MCF 10A (cell line): ENCODE measurements at regions of chr11 and their contacts with region 1.

Region 1: GRCh38 chr11:13772223-13773046 is 104.0 kb downstream of the FAR1 start:
- DNase-seq: peak; percentile 76
- H3K4me3 Mint-ChIP-seq: no peak overlapping the region
- H3K27ac Mint-ChIP-seq: no peak overlapping the region
- H3K4me1 Mint-ChIP-seq: no peaks in the 10 kb centered on the region
- H3K27me3 Mint-ChIP-seq: peaks cover 54% of the 10 kb centered on the region
- CTCF ChIP-seq: peak; percentile 74

Region 2: DNA sequence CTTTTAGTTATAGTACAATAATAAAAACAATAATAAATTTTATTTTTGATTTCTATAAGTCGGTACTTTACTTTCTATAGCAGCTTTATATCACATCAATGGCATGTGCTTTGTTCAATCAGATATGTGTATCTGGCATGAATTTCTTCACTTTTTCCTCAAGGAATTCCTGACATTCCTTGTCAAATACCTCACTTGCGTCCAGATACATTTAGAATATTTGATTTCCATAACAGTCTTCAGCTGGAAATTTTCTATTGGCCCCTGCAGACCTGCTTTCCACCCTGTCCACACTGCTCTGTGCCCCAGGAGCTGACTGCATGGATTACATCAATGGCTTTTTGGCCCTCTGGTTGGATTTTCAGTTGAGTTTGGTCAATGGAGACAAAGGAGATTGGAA is 10.7 kb before region 1 on chr11:
- CTCF ChIA-PET with region 1: interaction called, 46 read pairs
- POLR2A ChIA-PET with region 1: no interaction called
- intact Hi-C with region 1: no loop called
- DNase-seq: no peak
- H3K4me3 Mint-ChIP-seq: no peak overlapping the region
- H3K27ac Mint-ChIP-seq: no peak overlapping the region
- H3K4me1 Mint-ChIP-seq: peaks cover 4% of the 10 kb centered on the region
- H3K27me3 Mint-ChIP-seq: no peaks in the 10 kb centered on the region
- CTCF ChIP-seq: no peak

Region 3: GRCh38 chr11:13874597-13874996 is 102.2 kb after region 1 on chr11:
- CTCF ChIA-PET with region 1: interaction called, 5 read pairs
- POLR2A ChIA-PET with region 1: no interaction called
- intact Hi-C with region 1: loop called (anchors 5 kb)
- DNase-seq: no peak
- H3K4me3 Mint-ChIP-seq: no peak overlapping the region
- H3K27ac Mint-ChIP-seq: no peak overlapping the region
- H3K4me1 Mint-ChIP-seq: peaks cover 20% of the 10 kb centered on the region
- H3K27me3 Mint-ChIP-seq: peaks cover 19% of the 10 kb centered on the region
- CTCF ChIP-seq: no peak

Region 4: GRCh38 chr11:13949876-13950275 is 177.4 kb after region 1 on chr11:
- CTCF ChIA-PET with region 1: interaction called, 46 read pairs
- POLR2A ChIA-PET with region 1: no interaction called
- intact Hi-C with region 1: loop called (anchors 1 kb)
- DNase-seq: no peak
- H3K4me3 Mint-ChIP-seq: no peak overlapping the region
- H3K27ac Mint-ChIP-seq: no peak overlapping the region
- H3K4me1 Mint-ChIP-seq: no peaks in the 10 kb centered on the region
- H3K27me3 Mint-ChIP-seq: no peaks in the 10 kb centered on the region
- CTCF ChIP-seq: no peak

Region 5: DNA sequence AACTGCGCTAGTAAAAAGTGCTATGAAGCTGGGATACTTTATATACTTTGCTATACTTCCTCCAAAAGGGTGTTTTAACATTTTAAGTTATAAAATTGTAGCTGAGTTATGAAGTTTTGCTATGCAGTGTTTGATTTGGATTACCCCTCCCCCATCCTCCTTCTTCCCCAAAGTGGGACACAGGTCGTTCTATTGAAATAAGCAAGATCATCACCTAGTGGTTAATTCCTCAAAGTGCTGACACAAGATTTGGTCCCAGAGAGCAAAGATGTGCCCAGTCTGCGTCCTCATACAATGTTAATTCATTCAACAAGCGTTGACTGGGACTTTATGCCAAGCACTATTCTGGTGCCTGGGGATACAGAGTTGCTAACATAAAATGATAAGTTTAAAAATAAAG is 268.6 kb after region 1 on chr11:
- CTCF ChIA-PET with region 1: interaction called, 3 read pairs
- POLR2A ChIA-PET with region 1: no interaction called
- intact Hi-C with region 1: loop called (anchors 5 kb)
- DNase-seq: peak; percentile 33
- H3K4me3 Mint-ChIP-seq: no peak overlapping the region
- H3K27ac Mint-ChIP-seq: no peak overlapping the region
- H3K4me1 Mint-ChIP-seq: no peaks in the 10 kb centered on the region
- H3K27me3 Mint-ChIP-seq: peaks cover 35% of the 10 kb centered on the region
- CTCF ChIP-seq: no peak

Region 6: DNA sequence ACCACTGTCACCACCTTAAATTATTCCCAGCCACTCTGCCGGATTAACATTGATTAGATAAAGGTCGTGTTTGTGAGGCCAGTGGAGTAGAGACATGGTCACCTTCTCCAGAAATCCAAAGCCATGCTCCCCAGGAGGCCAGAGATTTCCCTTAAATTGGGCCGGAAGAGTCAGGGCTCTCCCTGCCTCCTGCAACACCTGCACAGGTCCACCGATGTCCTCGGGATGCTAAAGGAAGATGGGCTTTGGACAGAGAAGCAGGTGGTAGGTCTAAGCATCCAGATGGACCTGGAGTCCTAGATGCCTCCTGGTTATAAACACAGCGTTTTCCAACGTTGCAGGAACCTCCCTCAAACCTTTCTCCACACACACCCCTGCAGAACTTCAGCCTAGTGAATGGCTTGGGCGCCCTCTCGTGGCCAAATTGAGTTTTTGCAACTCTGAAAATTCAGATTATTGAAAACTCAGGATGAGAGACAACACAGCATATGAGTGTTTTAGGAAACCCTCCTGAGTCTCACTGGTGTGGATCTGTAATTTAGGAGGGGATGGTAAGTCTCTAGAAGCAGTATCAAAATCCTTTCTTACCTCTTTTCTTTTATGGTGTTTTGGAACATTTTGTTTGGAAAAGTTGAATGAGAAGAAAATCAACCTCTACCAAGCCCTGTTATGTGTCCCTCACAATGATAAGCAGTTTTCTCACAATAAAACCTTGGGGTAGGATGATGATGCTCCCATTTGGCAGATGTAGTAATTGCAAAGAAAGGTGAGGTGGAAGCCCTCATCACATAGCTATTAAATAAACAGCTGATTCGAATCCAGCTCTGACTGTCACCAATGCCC is 476.9 kb after region 1 on chr11:
- CTCF ChIA-PET with region 1: interaction called, 63 read pairs
- POLR2A ChIA-PET with region 1: no interaction called
- intact Hi-C with region 1: loop called (anchors 1 kb)
- DNase-seq: peak; percentile 75
- H3K4me3 Mint-ChIP-seq: no peak overlapping the region
- H3K27ac Mint-ChIP-seq: no peak overlapping the region
- H3K4me1 Mint-ChIP-seq: no peaks in the 10 kb centered on the region
- H3K27me3 Mint-ChIP-seq: peaks cover 69% of the 10 kb centered on the region
- CTCF ChIP-seq: peak; percentile 88